Ascending aorta (tissue), 2 donors: ENCODE measurements at regions of chr6 and their contacts with region 1.

Region 1: DNA sequence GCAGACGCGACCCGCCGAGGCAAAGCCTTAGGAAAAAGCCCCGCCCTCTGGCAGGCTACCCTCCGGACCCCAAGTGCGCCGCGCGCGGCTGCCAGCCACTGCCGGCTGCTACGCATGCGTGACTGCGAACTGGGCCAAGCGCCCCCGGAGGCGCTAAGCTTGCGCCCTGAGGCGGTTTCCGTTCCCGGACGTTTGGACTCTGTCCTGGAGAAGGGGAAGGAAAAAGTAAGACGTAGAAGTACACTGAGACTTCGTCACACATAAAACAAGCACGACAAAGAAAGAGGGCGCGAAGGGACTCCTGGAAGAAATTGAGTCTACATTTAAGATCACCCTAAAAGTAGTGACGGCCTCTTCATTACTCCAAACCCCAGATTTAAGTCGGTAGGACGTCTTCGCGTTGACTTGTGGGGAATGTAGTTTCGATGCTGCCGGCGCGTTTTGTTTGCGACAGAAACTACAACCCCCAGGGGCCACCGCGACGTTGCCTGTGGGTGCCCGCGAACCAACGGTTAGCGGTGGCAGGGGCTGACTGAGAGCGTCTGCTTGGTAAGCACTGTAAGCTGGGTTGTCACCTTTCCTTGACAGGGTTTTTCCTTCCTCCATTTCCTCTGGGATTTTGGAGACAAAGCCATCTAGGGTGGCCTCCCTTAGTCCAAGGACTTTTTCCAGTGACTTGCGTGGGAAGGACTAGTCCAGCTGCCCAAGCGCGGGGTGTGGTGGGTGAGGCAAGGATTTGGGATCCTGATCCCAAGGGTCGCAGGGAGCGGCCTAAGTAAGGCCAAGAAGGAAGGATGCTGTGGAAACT is at the start of gene CEP57L1:
- DNase-seq: peak; percentile 88 to 98
- H3K4me3 ChIP-seq: peak within 1 kb of the TSS; percentile 64 to 69
- H3K27ac ChIP-seq: peak within 1 kb of the TSS; percentile 95 to 97
- H3K4me1 ChIP-seq: peaks cover 2 to 13% of the 10 kb centered on the region in 2 donors
- H3K27me3 ChIP-seq: no peaks in the 10 kb centered on the region
- CTCF ChIP-seq: no peak
- total RNA-seq, gene CEP57L1: 1.1 TPM

Region 2: DNA sequence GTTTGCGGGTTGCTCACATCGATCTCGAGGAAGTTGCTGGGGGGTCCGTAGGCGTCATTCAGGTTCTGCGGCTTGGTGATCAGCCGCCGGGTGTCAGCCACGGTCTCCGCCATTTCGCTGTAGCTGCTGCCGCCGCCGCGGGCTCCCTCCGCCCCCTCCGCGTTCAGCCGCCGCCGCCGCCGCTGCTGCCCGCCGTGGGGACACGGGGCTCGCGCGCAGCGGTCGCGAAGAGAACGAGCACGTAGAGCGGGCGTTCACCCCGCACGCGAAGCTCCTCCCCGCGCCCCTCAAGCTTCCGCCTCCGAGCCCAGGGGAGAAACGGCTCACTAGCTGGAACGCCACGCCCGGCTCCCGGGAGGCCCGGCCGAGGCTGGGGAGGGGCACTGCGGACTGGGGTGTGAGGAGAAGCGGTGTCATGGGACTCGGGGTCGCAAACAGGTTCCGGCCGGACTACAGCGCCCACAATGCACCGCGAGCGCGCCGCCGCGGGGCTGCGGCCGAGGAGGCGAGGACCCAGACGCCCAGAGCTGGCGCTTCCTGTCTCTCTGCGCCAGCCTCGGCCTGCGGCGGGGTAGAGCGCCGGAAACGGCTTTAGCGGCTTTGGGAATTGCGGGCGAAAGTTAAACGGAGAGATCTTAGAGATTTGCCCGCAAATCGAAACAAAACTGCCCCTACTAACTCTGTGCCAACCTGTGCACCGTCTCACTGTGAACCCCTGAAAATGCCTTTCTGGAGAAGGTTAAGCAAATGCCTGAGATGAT is 834.2 kb before region 1 on chr6 and contains the start of gene SNX3:
- intact Hi-C with region 1: loop called (anchors 10 kb)
- DNase-seq: peak; percentile 91 to 98
- H3K4me3 ChIP-seq: peak within 1 kb of the TSS; percentile 88 to 91
- H3K27ac ChIP-seq: peak within 1 kb of the TSS; percentile 93 to 95
- H3K4me1 ChIP-seq: peaks cover 0 to 12% of the 10 kb centered on the region in 2 donors
- H3K27me3 ChIP-seq: no peaks in the 10 kb centered on the region
- CTCF ChIP-seq: no peak
- total RNA-seq, gene SNX3: 112 TPM

Region 3: GRCh38 chr6:109082188-109082577 is 13.0 kb before region 1 on chr6:
- intact Hi-C with region 1: loop called (anchors 2 kb)
- DNase-seq: no peak
- H3K4me3 ChIP-seq: no peak overlapping the region
- H3K27ac ChIP-seq: peak overlapping the region; percentile 47 to 82
- H3K4me1 ChIP-seq: peaks cover 12 to 33% of the 10 kb centered on the region in 2 donors
- H3K27me3 ChIP-seq: no peaks in the 10 kb centered on the region
- CTCF ChIP-seq: peak in 1 of 3 experiments; percentile 19

Region 4: DNA sequence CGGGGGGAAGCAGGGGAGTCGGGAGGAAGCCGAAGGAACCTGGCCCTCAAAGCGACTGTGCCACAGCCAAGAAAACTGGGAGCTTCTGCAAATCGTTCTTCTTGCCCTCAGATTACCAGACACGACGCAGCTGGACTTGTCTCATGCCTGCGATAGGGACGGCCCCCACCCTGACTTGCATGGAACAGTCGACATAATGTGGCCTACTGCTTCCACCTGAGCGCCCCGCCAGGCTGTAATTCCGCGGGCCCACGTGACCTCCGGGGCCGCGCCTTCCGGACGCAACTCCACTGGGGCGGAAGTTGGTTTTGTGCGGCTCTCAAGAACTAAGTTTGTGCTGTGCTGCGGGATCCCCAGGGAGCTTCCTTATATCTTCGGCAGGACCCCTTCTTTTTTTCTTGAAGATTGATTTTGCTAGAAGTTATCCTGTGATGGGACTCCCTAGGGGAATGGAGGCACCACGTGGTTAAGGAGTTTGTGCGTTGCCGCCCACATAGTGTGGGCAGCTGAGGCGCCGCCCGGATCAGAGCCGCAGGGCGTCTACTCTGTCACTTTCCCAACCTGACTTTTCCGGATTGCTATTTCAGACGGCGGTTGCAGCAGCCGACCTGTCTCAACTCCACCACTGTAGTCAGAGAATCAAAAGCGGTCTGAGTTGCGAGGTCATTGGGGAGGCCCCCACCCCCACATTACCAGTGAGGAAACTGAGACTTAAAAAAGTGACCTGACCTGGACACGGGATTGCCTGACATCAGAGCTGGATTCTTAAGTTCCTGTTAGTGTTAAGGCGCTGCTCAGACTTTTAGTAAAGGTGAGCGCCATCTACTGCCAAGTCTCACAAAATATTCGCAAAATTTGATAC is 287.6 kb after region 1 on chr6:
- intact Hi-C with region 1: loop called (anchors 1 kb)
- DNase-seq: peak; percentile 81 to 96
- H3K4me3 ChIP-seq: peak overlapping the region; percentile 84 to 95
- H3K27ac ChIP-seq: peak overlapping the region; percentile 99
- H3K4me1 ChIP-seq: peaks cover 0 to 17% of the 10 kb centered on the region in 2 donors
- H3K27me3 ChIP-seq: no peaks in the 10 kb centered on the region
- CTCF ChIP-seq: peak; percentile 47 to 66 (median 57)

Region 5: DNA sequence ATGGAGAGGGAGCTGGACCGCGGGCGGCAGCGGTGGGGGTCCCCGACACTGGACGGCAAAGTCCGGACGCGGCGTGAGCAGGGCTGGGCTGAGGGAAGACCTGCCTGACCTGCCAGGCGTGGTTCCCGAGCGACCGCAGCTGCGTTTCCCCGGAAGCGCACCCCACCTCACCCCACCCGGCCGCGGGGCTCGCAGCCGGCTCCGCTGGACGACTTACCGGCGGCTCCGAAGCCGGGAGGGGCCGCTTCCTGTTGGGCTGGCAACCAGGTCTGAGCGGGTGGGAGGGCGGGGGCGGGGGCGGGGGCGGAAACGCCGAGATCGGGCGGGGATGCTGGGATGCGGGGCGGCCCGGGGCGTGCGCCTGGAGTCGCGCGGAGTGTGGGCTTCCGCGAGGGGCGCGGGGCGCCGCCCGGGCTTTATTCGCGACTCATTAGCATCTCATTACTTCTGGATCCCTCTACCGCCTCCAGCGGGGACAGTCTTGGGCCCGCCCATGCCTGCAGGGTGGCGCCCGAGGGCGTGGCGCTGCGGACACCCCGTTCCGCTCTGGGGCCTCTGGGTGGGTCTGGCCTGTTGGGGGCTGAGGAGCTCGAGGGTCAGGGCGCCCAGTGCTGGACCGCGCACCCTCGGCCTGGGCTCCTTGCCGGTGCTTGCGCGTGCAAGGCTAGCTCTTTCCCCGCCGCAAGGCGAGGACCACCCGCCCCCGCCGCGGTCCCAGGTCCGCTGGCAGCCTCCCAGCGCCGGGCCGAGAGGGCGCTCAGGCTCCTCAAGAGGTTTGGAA is 360.5 kb after region 1 on chr6 and contains the start of gene MICAL1:
- intact Hi-C with region 1: loop called (anchors 2 kb)
- DNase-seq: peak in 1 of 2 donors; percentile 88
- H3K4me3 ChIP-seq: peak within 1 kb of the TSS; percentile 79 to 82
- H3K27ac ChIP-seq: peak within 1 kb of the TSS; percentile 84 to 88
- H3K4me1 ChIP-seq: peaks cover 14 to 20% of the 10 kb centered on the region in 2 donors
- H3K27me3 ChIP-seq: no peaks in the 10 kb centered on the region
- CTCF ChIP-seq: peak; percentile 22 to 45 (median 31)
- total RNA-seq, gene MICAL1: 55.6 TPM

Region 6: GRCh38 chr6:109690737-109691621 is 595.7 kb after region 1 on chr6 and contains the starts of genes AK9 and FIG4:
- intact Hi-C with region 1: loop called (anchors 2 kb)
- DNase-seq: peak; percentile 86 to 96
- H3K4me3 ChIP-seq: peak within 1 kb of the TSS; percentile 65 to 74
- H3K27ac ChIP-seq: peak within 1 kb of the TSS; percentile 83 to 90
- H3K4me1 ChIP-seq: no peaks in the 10 kb centered on the region
- H3K27me3 ChIP-seq: no peaks in the 10 kb centered on the region
- CTCF ChIP-seq: peak in 2 of 3 experiments; percentile 3 to 38
- total RNA-seq, gene AK9: 0.75 TPM
- total RNA-seq, gene FIG4: 27.9 TPM